ENCODE measurements at regions of chr17 and their contacts with region 1.

Region 1: GRCh38 chr17:1724506-1725362 is at the start of gene WDR81:
- DNase-seq: peak; percentile 94
- ATAC-seq: peak; percentile 79
- H3K4me3 Mint-ChIP-seq: peak within 1 kb of the TSS; percentile 77
- H3K27ac Mint-ChIP-seq: peak within 1 kb of the TSS; percentile 82
- H3K4me1 Mint-ChIP-seq: peaks cover 46% of the 10 kb centered on the region
- H3K27me3 Mint-ChIP-seq: no peaks in the 10 kb centered on the region
- total RNA-seq, gene WDR81: 29.4 to 30.8 TPM

Region 2: GRCh38 chr17:1703063-1703462 is 21.7 kb before region 1 on chr17:
- CTCF ChIA-PET with region 1: no interaction called
- POLR2A ChIA-PET with region 1: no interaction called
- DNase-seq: no peak
- ATAC-seq: no peak
- H3K4me3 Mint-ChIP-seq: no peak overlapping the region
- H3K27ac Mint-ChIP-seq: no peak overlapping the region
- H3K4me1 Mint-ChIP-seq: peaks cover 4% of the 10 kb centered on the region
- H3K27me3 Mint-ChIP-seq: peaks cover 20% of the 10 kb centered on the region

Region 3: DNA sequence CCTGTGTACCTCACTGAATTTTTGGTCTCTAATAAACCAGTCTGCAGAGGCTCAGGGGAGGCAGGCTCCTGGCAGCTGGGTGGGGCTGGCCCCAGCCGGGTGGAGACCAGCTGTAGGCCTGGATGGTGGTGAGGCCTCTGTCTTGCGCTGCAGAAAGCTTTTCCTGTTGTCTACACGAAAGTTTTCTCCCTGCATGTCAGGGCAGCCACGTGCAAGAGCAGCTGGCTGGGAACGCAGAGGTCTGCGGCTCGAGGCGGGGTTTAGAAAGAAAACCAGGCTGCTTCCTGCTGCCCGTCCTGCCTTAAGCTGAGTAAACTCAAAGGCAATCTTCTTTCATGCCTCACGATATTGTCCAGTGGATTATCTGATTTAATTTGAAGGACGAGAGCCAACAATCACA is 39.5 kb after region 1 on chr17:
- CTCF ChIA-PET with region 1: interaction called, 38 read pairs
- POLR2A ChIA-PET with region 1: interaction called, 6 read pairs
- DNase-seq: peak; percentile 90
- ATAC-seq: peak; percentile 97
- H3K4me3 Mint-ChIP-seq: peak overlapping the region; percentile 27
- H3K27ac Mint-ChIP-seq: peak overlapping the region; percentile 87
- H3K4me1 Mint-ChIP-seq: peaks cover 34% of the 10 kb centered on the region
- H3K27me3 Mint-ChIP-seq: no peaks in the 10 kb centered on the region

Region 4: DNA sequence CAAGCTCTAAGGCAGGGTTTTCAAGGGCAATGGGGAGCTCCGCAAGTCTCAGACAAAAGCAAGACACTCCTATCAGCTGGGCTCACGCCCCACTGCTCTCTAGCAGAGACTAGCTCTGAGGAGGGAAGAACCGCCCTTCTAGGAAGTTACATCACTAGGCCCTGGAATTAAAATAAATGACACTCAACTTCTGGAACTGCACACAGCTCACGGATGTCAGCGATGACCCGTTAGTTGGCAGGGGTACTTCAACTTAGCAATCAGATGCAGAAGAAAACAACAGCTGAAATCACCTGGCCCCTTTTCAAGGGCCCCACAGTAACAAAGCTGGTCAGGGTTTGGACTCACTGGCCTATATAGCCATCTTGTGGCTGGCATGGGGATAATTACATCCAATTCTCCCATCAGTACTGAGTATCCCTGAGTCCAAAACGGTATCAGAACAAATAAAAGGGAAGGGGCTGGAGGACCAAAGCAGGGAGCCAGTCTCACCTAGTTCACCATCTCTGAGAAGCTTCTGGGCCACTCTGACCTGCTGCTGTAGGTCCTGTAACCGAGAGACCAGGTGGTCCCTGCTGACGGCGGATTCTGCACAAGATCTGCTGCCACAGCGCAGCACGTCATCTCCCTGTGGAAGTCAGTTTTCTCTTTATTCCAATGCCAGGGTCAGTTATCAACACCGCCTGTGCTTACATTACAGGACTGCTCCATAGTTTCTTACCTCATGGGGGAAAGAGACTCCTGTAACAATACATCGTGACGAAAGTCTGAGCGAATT is 59.3 kb after region 1 on chr17:
- CTCF ChIA-PET with region 1: interaction called, 35 read pairs
- POLR2A ChIA-PET with region 1: no interaction called
- DNase-seq: no peak
- ATAC-seq: no peak
- H3K4me3 Mint-ChIP-seq: no peak overlapping the region
- H3K27ac Mint-ChIP-seq: peak overlapping the region; percentile 33
- H3K4me1 Mint-ChIP-seq: peaks cover 12% of the 10 kb centered on the region
- H3K27me3 Mint-ChIP-seq: no peaks in the 10 kb centered on the region

Region 5: GRCh38 chr17:1829592-1830257 is 105.0 kb after region 1 on chr17 and contains the starts of genes RPA1 and SMYD4:
- CTCF ChIA-PET with region 1: interaction called, 17 read pairs
- POLR2A ChIA-PET with region 1: interaction called, 8 read pairs
- DNase-seq: peak; percentile 92
- ATAC-seq: peak; percentile 99
- H3K4me3 Mint-ChIP-seq: peak within 1 kb of the TSS; percentile 91
- H3K27ac Mint-ChIP-seq: peak within 1 kb of the TSS; percentile 91
- H3K4me1 Mint-ChIP-seq: peaks cover 71% of the 10 kb centered on the region
- H3K27me3 Mint-ChIP-seq: no peaks in the 10 kb centered on the region
- total RNA-seq, gene RPA1: 314 to 325 TPM
- total RNA-seq, gene SMYD4: 40.3 to 41.7 TPM

Region 6: DNA sequence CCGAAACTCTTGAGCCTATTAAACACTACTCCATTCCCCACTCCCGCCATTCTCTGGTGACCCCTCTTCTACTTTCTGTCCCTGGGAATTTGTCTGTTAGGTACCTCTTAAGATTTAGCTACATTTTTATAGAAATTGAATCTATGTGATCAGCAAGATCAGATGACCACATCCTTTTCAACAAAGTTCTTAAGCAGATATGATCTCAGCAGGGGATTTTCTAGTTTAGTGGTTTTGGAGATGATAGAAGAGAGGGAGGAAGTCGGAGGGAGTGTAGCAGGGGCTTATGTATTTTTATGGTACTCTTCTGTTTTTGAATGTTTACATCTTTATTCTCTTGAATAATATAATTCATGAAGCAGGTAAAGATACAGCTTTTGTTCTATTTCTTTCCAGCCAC is 145.9 kb after region 1 on chr17:
- CTCF ChIA-PET with region 1: interaction called, 44 read pairs
- POLR2A ChIA-PET with region 1: interaction called, 3 read pairs
- DNase-seq: peak; percentile 39
- ATAC-seq: peak; percentile 67
- H3K4me3 Mint-ChIP-seq: peak overlapping the region; percentile 58
- H3K27ac Mint-ChIP-seq: peak overlapping the region; percentile 90
- H3K4me1 Mint-ChIP-seq: peaks cover 61% of the 10 kb centered on the region
- H3K27me3 Mint-ChIP-seq: no peaks in the 10 kb centered on the region

Region 7: DNA sequence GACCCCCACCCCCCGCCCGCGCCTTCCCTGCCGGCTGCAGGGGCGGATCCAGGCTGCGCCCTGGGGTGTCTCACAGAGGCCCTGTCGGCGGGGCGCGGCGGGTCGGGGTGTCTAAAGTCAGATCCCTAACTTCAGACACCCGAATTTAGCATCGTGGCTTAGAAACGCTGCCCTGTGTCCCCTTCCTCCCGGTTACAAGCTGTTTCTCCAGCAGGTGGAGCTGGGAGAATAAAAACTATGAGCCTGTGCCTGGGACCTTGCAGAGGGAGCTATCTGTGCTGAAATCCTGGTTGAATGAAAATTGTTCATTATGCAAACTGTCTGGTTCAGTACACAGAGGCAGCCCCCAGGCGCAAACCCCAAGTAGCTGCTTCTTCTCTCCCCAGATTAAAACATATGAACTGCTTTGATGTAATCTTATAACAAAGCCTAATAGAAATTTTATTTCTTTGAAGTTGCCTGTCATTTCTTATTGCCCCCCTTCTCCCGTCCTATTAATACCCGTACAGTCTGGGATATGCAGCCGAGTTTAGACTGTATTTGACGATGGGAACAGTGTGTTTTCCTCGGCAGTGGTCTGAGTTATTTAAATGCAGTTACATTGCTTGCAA is 184.1 kb after region 1 on chr17:
- CTCF ChIA-PET with region 1: interaction called, 11 read pairs
- POLR2A ChIA-PET with region 1: no interaction called
- DNase-seq: peak; percentile 59
- ATAC-seq: peak; percentile 80
- H3K4me3 Mint-ChIP-seq: no peak overlapping the region
- H3K27ac Mint-ChIP-seq: no peak overlapping the region
- H3K4me1 Mint-ChIP-seq: peaks cover 9% of the 10 kb centered on the region
- H3K27me3 Mint-ChIP-seq: peaks cover 50% of the 10 kb centered on the region

Measured in activated CD8-positive, alpha-beta T cell treated with anti-CD3 and anti-CD28 coated beads, Interleukin-2, amount 10 ng/mL, durations not matched to agents 7 days and 5 days (primary cell).